ENCODE measurements at regions of chr17 and their contacts with region 1.

Region 1: GRCh38 chr17:74748529-74749365 is at the start of gene NHERF1:
- DNase-seq: peak; percentile 93
- H3K4me3 ChIP-seq: peak within 1 kb of the TSS; percentile 66 to 82 (median 77)
- H3K27ac ChIP-seq: peak within 1 kb of the TSS; percentile 6
- H3K4me1 ChIP-seq: peaks cover 10% of the 10 kb centered on the region
- H3K27me3 ChIP-seq: no peaks in the 10 kb centered on the region
- CTCF ChIP-seq: no peak
- total RNA-seq, gene NHERF1: 5.8 to 24.6 TPM

Region 2: GRCh38 chr17:74135391-74136167 is 613.2 kb before region 1 on chr17:
- CTCF ChIA-PET with region 1: no interaction called
- dilution Hi-C with region 1: no loop called
- in situ Hi-C with region 1: no loop called
- intact Hi-C with region 1: no loop called
- DNase-seq: no peak
- H3K4me3 ChIP-seq: no peak overlapping the region
- H3K27ac ChIP-seq: no peak overlapping the region
- H3K4me1 ChIP-seq: no peaks in the 10 kb centered on the region
- H3K27me3 ChIP-seq: no peaks in the 10 kb centered on the region
- CTCF ChIP-seq: no peak

Region 3: DNA sequence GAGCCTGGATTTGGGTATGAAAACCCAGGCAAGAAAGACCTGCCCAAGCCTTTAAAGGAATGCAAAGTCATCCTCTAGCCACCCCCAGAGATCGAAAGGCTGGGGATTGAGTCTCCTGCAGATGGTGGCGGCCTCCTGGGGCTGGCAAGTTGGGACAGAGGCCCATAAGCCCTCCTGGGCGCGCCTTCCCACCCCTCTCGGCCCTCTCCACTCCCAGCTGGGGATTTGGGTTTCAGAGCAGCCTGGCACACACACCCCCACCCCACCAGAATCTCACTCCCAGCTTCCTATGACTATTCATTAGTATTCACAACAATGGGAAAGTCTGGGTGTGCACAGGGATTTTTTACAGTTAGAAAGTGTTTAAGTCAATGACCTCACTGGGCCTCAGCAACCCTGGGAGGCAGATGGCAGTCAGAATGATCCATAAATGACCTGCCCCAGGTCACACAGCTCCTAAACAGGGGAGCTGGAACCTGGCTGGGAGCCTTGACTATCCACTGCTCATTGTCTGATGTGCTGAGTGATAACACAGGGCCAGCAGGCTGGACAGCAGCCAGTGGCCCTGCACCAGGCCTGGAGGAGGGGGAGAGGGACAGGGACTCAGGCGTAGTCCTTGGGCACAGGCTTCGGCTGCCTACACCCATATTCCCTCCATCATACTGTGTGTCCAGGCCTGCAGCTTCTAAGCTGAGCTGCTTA is 11.8 kb after region 1 on chr17:
- CTCF ChIA-PET with region 1: no interaction called
- dilution Hi-C with region 1: no loop called
- in situ Hi-C with region 1: no loop called
- intact Hi-C with region 1: loop called (anchors 1 kb)
- DNase-seq: peak; percentile 53
- H3K4me3 ChIP-seq: no peak overlapping the region
- H3K27ac ChIP-seq: peak overlapping the region; percentile 53
- H3K4me1 ChIP-seq: peaks cover 43% of the 10 kb centered on the region
- H3K27me3 ChIP-seq: no peaks in the 10 kb centered on the region
- CTCF ChIP-seq: no peak

Region 4: DNA sequence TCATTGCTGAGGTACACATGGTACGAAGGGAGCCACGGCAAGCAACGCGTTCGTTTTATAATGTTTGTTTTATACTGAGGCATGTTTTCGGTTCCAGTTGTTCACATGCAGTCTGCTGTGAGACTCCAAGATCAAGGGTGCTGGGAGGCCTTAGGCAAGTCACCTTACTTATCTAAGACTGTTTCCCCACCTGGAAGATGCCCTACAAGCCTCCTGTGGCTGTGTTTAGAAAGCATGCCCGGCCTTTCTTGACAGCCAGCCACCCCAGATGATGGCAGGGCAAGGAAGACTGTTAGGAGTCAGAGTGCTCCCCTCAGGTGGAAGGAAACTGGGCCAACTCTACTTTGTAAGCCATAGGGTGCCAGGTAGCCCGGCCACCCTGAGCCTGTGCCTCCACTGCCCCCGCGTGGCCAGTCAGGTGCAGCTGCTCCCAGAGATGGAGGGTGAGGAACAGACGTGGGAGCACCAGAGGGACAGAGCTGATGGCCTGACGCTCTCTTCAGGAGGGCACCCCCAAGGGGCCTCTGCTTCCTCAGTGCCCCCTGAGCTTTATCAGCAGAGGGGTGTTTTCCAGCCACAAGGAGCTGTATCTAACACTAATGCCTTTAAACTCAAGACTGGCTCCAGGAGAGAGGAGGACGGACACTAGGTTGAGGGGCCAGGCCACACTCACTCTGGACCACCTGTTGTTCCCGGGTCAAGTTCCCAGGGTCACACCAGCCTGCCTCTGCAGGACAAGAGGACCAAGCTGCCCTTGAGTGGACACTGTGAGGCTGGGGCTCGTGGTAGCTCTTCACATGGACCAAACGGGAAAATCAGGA is 22.0 kb after region 1 on chr17:
- CTCF ChIA-PET with region 1: interaction called, 5 read pairs
- dilution Hi-C with region 1: no loop called
- in situ Hi-C with region 1: no loop called
- intact Hi-C with region 1: loop called (anchors 1 kb)
- DNase-seq: peak; percentile 51
- H3K4me3 ChIP-seq: no peak overlapping the region
- H3K27ac ChIP-seq: no peak overlapping the region
- H3K4me1 ChIP-seq: peaks cover 11% of the 10 kb centered on the region
- H3K27me3 ChIP-seq: no peaks in the 10 kb centered on the region
- CTCF ChIP-seq: peak; percentile 88 to 95

Region 5: DNA sequence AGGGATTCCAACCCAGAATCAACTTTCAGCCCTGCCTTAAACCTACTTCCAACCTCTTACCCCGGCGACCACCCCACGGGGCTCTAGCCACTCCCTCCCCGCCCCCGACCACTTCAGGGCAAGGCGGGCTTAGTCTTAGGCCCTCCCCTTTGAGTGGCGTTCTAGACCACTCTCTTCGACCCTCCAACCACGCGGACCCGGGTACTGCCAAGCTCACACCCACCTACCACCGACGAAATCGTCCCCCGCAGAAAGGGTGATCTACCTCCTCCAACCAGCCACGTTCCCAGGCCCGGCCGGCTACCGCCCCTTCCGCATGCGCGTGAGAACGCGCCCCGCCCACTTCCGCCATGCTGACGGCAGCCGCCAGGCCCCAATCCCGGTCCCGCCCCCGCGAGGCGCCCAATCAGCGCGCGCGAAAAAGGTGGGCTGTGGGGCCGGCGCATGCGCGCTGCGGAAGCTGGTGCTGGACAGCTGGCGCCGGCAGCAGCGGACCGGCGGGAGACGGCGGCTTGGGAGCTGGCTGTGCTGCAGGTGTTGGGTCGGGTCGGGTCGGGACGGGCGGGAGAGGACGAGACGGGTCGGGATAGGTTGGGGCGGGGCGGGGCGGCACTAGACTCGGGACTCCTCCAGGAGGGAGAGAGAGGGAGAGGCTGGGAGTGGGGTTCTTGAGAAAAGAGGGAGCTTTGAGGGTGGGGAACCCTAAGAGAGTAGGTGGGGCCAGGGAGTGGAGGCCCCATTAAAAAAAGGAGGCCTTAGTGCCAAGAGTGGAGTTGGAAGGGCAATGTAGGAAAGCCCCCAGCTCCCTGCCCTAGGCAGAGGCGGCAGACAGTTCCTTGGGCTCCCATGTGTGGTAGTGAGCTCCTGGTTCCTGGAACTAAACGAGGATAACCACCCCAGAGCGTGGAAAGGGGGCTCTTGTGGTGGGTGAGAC is 27.6 kb after region 1 on chr17 and contains the start of gene NAT9:
- CTCF ChIA-PET with region 1: no interaction called
- dilution Hi-C with region 1: no loop called
- in situ Hi-C with region 1: no loop called
- intact Hi-C with region 1: loop called (anchors 5 kb)
- DNase-seq: peak; percentile 94
- H3K4me3 ChIP-seq: peak within 1 kb of the TSS; percentile 80 to 84 (median 80)
- H3K27ac ChIP-seq: peak within 1 kb of the TSS; percentile 72
- H3K4me1 ChIP-seq: peaks cover 5% of the 10 kb centered on the region
- H3K27me3 ChIP-seq: no peaks in the 10 kb centered on the region
- CTCF ChIP-seq: no peak
- total RNA-seq, gene NAT9: 24.7 to 76.5 TPM

Region 6: DNA sequence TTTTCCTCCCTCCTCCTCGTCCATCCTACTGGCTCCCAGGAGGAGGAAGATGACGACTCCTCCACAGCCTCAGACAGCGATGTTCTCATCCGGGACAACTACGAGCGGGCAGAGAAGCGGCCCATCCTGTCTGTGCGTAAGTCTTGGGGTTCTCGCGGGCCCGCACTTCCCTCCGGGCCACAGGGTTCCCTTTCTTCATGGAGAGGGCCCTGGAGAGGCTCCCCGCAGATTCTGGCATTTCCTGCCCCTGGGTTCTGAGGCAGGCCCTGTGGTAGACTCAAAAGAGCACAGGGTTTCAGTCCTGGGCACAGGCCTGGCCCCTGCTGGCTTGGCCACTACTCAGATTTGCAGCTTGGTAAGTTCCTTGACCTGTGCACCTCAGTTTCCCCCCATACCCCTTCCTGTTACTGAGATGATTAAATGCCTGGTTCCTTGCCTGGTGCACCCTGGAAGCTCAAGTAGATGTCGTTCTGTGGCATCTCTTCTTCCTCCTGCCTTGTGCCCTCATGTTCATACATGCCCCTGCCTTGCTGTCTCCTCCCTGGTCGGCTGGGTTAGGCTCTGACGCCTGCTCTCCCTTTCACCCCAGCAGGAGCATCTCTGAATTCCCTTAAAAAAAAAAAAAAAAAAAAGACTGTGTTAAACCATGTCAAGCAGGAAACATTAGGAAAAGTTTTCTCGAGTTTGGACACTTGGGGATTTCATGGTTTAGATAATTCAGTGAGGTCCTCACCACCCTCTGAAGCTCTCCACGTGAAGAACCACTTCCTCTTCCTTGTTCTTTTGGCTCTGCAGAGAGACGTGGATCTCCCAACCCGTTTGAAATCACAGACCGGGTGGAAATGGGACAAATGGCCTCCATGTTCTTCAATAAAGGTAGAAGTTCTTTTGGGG is 41.7 kb after region 1 on chr17:
- CTCF ChIA-PET with region 1: no interaction called
- dilution Hi-C with region 1: no loop called
- in situ Hi-C with region 1: no loop called
- intact Hi-C with region 1: loop called (anchors 5 kb)
- DNase-seq: no peak
- H3K4me3 ChIP-seq: no peak overlapping the region
- H3K27ac ChIP-seq: no peak overlapping the region
- H3K4me1 ChIP-seq: no peaks in the 10 kb centered on the region
- H3K27me3 ChIP-seq: no peaks in the 10 kb centered on the region
- CTCF ChIP-seq: no peak

Region 7: GRCh38 chr17:74852237-74853047 is 103.7 kb after region 1 on chr17:
- CTCF ChIA-PET with region 1: no interaction called
- dilution Hi-C with region 1: no loop called
- in situ Hi-C with region 1: loop called in 1 of 2 experiments (anchors 10 kb)
- intact Hi-C with region 1: no loop called
- DNase-seq: peak; percentile 51
- H3K4me3 ChIP-seq: no peak overlapping the region
- H3K27ac ChIP-seq: no peak overlapping the region
- H3K4me1 ChIP-seq: no peaks in the 10 kb centered on the region
- H3K27me3 ChIP-seq: no peaks in the 10 kb centered on the region
- CTCF ChIP-seq: no peak

Region 8: GRCh38 chr17:74864866-74865395 is 116.2 kb after region 1 on chr17:
- CTCF ChIA-PET with region 1: no interaction called
- dilution Hi-C with region 1: no loop called
- in situ Hi-C with region 1: loop called in 1 of 2 experiments (anchors 5 kb)
- intact Hi-C with region 1: loop called (anchors 1 kb)
- DNase-seq: peak; percentile 41
- H3K4me3 ChIP-seq: no peak overlapping the region
- H3K27ac ChIP-seq: no peak overlapping the region
- H3K4me1 ChIP-seq: peaks cover 5% of the 10 kb centered on the region
- H3K27me3 ChIP-seq: peaks cover 18% of the 10 kb centered on the region
- CTCF ChIP-seq: peak; percentile 96

Region 9: DNA sequence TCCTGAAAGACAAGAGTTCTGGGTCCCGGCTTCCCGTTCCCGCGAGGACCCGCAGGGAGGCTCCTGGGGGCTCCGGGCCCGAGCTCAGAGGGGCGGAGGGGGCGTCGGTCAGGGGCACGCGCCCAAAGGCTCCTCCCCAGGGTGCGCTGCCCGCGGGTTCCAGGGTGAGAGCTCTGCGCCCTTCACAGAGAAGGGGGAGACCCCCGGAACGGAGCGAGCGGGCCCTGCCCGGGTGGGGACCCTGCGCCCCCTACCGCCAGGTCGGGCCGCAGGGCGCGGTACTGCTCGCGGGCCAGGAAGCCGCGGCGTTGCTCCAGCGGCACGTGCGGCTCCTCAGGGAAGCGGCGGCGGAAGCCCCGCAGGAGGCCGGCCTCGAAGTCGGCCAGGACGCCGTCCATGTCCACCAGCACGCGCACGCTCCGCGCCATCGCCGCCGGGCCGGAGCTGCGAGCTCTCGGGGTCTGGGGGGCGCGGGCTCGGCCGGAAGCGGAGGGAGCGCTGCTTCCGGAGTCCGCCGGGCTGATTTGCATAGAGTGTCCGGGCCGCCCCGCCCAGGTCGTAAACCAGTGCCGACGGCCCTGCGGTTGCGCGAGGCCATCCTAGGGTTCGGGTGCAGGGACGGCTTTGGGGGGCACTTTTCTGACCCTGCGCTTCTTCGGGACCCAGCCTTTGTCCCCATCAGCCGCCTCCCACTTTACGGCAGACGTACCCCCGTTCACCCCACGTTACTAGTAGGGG is 382.7 kb after region 1 on chr17 and contains the start of gene NT5C:
- CTCF ChIA-PET with region 1: no interaction called
- dilution Hi-C with region 1: no loop called
- in situ Hi-C with region 1: no loop called
- intact Hi-C with region 1: no loop called
- DNase-seq: peak; percentile 69
- H3K4me3 ChIP-seq: peak within 1 kb of the TSS; percentile 72 to 97 (median 87)
- H3K27ac ChIP-seq: peak within 1 kb of the TSS; percentile 67
- H3K4me1 ChIP-seq: peaks cover 25% of the 10 kb centered on the region
- H3K27me3 ChIP-seq: no peaks in the 10 kb centered on the region
- CTCF ChIP-seq: peak; percentile 26 to 69
- total RNA-seq, gene NT5C: 45.7 to 65.7 TPM

Measured in mammary epithelial cell (primary cell).